ENCODE measurements at regions of chr16 and their contacts with region 1.

Region 1: DNA sequence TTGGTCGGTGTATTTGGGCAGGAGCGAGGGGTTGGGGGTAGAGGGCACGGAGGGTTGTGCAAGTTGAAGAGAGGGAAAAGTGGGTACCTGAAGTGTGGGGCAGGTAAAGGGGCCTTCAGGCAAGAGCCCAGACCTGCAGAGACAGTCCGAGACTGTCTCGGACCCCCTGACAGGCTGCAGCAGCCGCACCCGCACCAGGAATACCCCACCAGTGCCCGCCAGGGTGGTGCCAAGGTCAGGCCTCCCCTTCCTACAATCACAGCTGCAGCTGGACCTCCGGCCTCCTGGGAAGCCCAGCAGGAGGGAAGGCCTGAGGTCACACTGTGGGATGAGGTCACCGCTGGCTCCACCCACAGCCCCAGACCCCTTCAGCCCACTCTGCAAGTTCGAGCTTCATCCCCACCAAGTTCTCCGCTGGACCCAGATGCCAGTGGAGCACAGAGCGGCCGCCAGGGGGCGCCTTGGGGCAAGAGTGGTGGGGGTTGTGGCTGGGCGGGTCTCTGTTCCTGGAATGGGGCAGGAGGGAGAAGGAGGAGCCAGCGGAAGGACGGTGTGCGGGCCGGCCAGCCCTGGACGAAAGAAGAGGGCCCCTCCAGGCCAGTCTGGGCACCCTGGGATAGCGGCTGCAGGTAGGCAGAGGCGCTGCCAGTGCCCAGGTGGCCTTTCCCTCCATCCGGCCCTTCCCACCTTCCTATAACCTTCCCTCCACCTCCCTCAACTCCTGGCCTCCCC is at the start of gene HSD3B7:
- DNase-seq: peak; percentile 92 to 95 (median 93)
- ATAC-seq: peak; percentile 95
- H3K4me3 ChIP-seq: peak within 1 kb of the TSS; percentile 44
- H3K27ac ChIP-seq: peak within 1 kb of the TSS; percentile 51
- H3K4me1 ChIP-seq: peaks cover 7 to 68% of the 10 kb centered on the region in 2 experiments; a peak in 4 of 5 replicates
- H3K27me3 ChIP-seq: no peaks in the 10 kb centered on the region
- CTCF ChIP-seq: peak; percentile 90 to 95 (median 92)
- EP300 ChIP-seq: peak; percentile 7; the same call in 1 of the 2 replicates
- POLR2A ChIP-seq: peak; percentile 58
- RAD21 ChIP-seq: peak; percentile 91 to 92
- polyA plus RNA-seq, gene HSD3B7: 5.4 to 6.7 TPM

Region 2: GRCh38 chr16:30534368-30535105 is 450.3 kb before region 1 on chr16 and contains the start of gene ZNF747:
- CTCF ChIA-PET with region 1: no interaction called
- POLR2A ChIA-PET with region 1: no interaction called
- in situ Hi-C with region 1: no loop called
- intact Hi-C with region 1: no loop called
- DNase-seq: peak; percentile 83 to 94 (median 88)
- ATAC-seq: peak; percentile 88
- H3K4me3 ChIP-seq: peak within 1 kb of the TSS; percentile 49
- H3K27ac ChIP-seq: peak within 1 kb of the TSS; percentile 96
- H3K4me1 ChIP-seq: peaks cover 9 to 50% of the 10 kb centered on the region in 2 experiments; a peak in 4 of 5 replicates
- H3K27me3 ChIP-seq: no peaks in the 10 kb centered on the region
- CTCF ChIP-seq: peak in 1 of 3 experiments; percentile 6; a peak in 2 of 6 replicates
- EP300 ChIP-seq: no peak
- POLR2A ChIP-seq: no peak
- RAD21 ChIP-seq: 0 out of 4 replicates have a peak, but pooled peaks of 1 of the 2 experiments have one; percentile 5
- polyA plus RNA-seq, gene ZNF747: 0.14 to 0.27 TPM

Region 3: DNA sequence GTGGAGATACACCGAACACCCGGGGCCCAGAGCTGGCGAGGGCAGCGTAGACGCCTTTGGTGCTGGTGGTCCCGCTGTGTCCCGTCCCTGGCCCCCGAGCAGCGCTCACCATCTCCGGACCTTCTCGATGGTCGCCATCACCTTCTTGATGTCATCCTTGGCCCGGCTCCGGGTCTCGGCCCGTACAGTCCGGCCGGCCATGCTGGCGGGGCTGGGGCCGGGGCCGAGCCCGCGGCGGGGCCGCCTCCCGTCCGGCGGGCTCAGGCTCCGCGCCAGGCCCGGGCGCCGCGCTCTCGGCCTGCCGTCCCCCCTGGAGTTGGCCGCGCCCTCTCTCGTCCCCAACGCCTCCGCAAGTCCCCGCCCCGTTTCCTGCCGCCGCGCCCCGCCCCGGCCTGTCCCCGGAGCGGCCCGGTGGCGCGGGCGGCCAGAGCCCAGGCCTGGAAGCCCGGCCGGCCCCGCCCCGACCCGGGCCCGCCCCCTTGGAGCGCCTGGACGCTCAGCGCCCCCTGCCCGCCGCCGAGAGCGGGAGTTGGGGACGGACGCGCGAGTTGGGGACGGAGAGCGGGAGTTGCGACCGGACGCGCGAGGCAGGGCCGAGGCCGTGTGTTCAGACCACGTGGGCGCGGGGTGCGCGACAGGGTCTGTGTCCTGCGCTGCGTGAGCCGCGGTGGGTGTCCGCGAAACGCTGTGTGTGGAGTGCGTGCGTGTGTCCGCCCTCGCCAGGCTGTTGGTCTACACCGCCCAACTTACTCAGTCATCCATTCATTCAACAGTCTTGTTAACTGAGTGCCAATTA is 90.9 kb before region 1 on chr16 and contains the start of gene BCL7C:
- CTCF ChIA-PET with region 1: no interaction called
- POLR2A ChIA-PET with region 1: no interaction called
- in situ Hi-C with region 1: no loop called
- intact Hi-C with region 1: no loop called
- DNase-seq: peak; percentile 91 to 95 (median 92)
- ATAC-seq: peak; percentile 86
- H3K4me3 ChIP-seq: peak within 1 kb of the TSS; percentile 67
- H3K27ac ChIP-seq: peak within 1 kb of the TSS; percentile 90
- H3K4me1 ChIP-seq: peaks cover 35 to 47% of the 10 kb centered on the region in 2 experiments
- H3K27me3 ChIP-seq: no peaks in the 10 kb centered on the region
- CTCF ChIP-seq: peak; percentile 41 to 75 (median 59); a peak in 5 of 6 replicates
- EP300 ChIP-seq: no peak
- POLR2A ChIP-seq: peak; percentile 76
- RAD21 ChIP-seq: peak; percentile 37 to 52
- polyA plus RNA-seq, gene BCL7C: 1.7 to 2.6 TPM

Region 4: DNA sequence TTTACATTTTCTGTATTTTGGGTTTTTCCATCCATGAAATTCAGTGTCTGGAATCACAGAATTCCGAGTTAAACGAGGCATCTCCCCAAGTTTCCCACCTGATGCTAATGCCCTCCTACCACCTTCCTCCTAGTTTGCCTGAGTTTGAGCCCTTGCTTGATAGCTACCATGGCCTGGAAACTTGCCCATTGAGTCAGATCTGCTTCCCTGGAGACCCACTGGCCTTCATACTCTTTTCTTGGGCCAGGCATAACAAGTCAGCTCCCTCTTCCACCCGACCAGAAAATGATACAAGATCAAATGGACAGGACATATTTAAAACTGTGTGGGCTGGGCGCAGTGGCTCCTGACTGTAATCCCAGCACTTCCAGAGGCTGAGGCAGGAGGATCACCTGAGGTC is 17.0 kb before region 1 on chr16:
- CTCF ChIA-PET with region 1: no interaction called
- POLR2A ChIA-PET with region 1: interaction called, 32 read pairs
- in situ Hi-C with region 1: no loop called
- intact Hi-C with region 1: no loop called
- DNase-seq: no peak
- ATAC-seq: no peak
- H3K4me3 ChIP-seq: no peak overlapping the region
- H3K27ac ChIP-seq: no peak overlapping the region
- H3K4me1 ChIP-seq: peaks cover 0 to 7% of the 10 kb centered on the region in 2 experiments; a peak in 1 of 5 replicates
- H3K27me3 ChIP-seq: no peaks in the 10 kb centered on the region
- CTCF ChIP-seq: no peak
- EP300 ChIP-seq: no peak
- POLR2A ChIP-seq: no peak
- RAD21 ChIP-seq: no peak

Region 5: GRCh38 chr16:30997000-30997886 is 12.4 kb after region 1 on chr16:
- CTCF ChIA-PET with region 1: no interaction called
- POLR2A ChIA-PET with region 1: no interaction called
- in situ Hi-C with region 1: no loop called
- intact Hi-C with region 1: no loop called
- DNase-seq: peak; percentile 89 to 99 (median 98)
- ATAC-seq: peak; percentile 93
- H3K4me3 ChIP-seq: peak overlapping the region; percentile 69
- H3K27ac ChIP-seq: peak overlapping the region; percentile 91
- H3K4me1 ChIP-seq: peaks cover 48 to 50% of the 10 kb centered on the region in 2 experiments
- H3K27me3 ChIP-seq: no peaks in the 10 kb centered on the region
- CTCF ChIP-seq: no peak
- EP300 ChIP-seq: no peak
- POLR2A ChIP-seq: peak; percentile 90
- RAD21 ChIP-seq: no peak

Region 6: DNA sequence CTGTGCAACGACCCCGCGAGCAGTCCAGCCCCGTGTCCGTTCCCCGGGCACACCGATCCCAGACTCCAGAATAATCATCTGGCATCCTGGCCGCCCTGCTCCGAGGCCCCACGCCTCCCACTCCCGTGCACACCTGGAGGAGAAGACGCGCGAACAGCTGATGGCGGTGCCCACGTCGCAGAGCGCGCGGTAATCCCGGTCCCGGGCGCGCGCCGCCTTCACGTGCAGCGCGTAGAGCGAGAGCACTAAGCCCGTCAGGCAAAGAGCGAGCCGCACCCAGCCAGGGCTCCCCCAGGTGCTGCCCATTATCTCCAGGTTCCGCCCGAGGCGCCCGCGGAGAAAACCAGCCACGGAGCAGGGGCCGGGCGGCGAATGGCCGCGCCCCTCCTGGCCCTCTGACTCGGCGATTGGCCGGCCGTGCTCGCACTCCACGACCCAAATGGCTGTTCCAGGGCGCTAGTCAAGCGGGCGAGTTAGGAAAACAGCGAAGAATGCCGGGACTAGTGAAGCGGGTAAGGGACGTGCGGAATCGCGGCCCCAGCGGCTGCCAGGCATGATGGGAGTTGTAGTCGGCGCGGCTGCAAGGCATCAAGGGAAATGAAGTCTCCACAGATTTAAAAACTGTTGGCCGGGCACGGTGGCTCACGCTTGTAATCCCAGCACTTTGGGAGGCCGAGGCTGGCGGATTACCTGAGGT is 109.7 kb after region 1 on chr16 and contains the start of gene VKORC1:
- CTCF ChIA-PET with region 1: interaction called, 3 read pairs
- POLR2A ChIA-PET with region 1: interaction called, 4 read pairs
- in situ Hi-C with region 1: no loop called
- intact Hi-C with region 1: loop called (anchors 1 kb)
- DNase-seq: peak; percentile 91 to 98 (median 93)
- ATAC-seq: peak; percentile 96
- H3K4me3 ChIP-seq: peak within 1 kb of the TSS; percentile 79
- H3K27ac ChIP-seq: peak within 1 kb of the TSS; percentile 70
- H3K4me1 ChIP-seq: peaks cover 17 to 32% of the 10 kb centered on the region in 2 experiments; a peak in 4 of 5 replicates
- H3K27me3 ChIP-seq: no peaks in the 10 kb centered on the region
- CTCF ChIP-seq: no peak
- EP300 ChIP-seq: no peak
- POLR2A ChIP-seq: peak; percentile 77
- RAD21 ChIP-seq: no peak
- polyA plus RNA-seq, gene VKORC1: 30.0 to 47.3 TPM

Region 7: DNA sequence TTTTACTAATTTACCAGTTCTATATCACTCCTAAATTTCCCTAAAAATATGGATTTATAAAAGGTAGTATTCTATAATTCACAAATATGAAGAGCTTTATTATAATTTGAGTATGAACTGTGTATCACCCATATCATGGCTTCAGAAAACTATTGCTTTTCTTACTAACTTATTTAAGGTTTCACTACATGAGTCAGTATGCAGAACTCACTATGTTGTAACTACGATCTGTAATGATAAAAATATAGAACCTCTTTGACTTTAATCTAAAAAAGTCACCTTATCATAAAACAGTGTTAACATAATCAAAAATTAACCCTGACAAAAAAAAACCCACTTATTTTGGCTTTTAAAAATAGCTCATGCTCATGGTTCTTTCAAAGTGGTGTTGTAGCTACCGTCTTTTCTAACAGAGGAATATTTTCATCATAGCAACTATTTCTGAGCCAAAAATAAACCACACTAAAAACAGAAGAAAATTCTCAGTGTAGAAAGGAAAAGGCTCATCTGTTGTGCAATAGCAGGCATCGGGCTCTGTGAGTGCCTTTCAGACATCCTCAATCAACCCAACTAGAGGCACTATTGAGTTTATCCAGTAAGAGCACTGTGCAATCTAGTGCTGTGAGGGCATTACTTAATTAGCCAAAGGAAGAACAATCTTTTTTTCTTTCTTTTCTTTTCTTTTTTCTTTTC is 317.0 kb after region 1 on chr16:
- CTCF ChIA-PET with region 1: interaction called, 14 read pairs
- POLR2A ChIA-PET with region 1: no interaction called
- in situ Hi-C with region 1: loop called (anchors 10 kb)
- intact Hi-C with region 1: loop called (anchors 10 kb)
- DNase-seq: peak in 3 of 4 experiments; percentile 13 to 24 (median 14)
- ATAC-seq: peak; percentile 84
- H3K4me3 ChIP-seq: no peak overlapping the region
- H3K27ac ChIP-seq: no peak overlapping the region
- H3K4me1 ChIP-seq: peaks cover 0 to 5% of the 10 kb centered on the region in 2 experiments; a peak in 1 of 5 replicates
- H3K27me3 ChIP-seq: peaks cover 3 to 4% of the 10 kb centered on the region in 2 experiments; a peak in 1 of 5 replicates
- CTCF ChIP-seq: no peak
- EP300 ChIP-seq: no peak
- POLR2A ChIP-seq: no peak
- RAD21 ChIP-seq: peak in 1 of 2 experiments; percentile 10; a peak in 1 of 4 replicates

Region 8: GRCh38 chr16:31427441-31428278 is 442.8 kb after region 1 on chr16:
- CTCF ChIA-PET with region 1: no interaction called
- POLR2A ChIA-PET with region 1: interaction called, 3 read pairs
- in situ Hi-C with region 1: loop called (anchors 25 kb)
- intact Hi-C with region 1: no loop called
- DNase-seq: peak; percentile 63 to 89 (median 85)
- ATAC-seq: peak; percentile 51
- H3K4me3 ChIP-seq: no peak overlapping the region
- H3K27ac ChIP-seq: no peak overlapping the region
- H3K4me1 ChIP-seq: peaks cover 0 to 13% of the 10 kb centered on the region in 2 experiments; a peak in 2 of 5 replicates
- H3K27me3 ChIP-seq: peaks cover 11 to 22% of the 10 kb centered on the region in 2 experiments; a peak in 4 of 5 replicates
- CTCF ChIP-seq: no peak
- EP300 ChIP-seq: no peak
- POLR2A ChIP-seq: no peak
- RAD21 ChIP-seq: no peak